IMR-90 (cell line): ENCODE measurements at regions of chr17 and their contacts with region 1.

Region 1: DNA sequence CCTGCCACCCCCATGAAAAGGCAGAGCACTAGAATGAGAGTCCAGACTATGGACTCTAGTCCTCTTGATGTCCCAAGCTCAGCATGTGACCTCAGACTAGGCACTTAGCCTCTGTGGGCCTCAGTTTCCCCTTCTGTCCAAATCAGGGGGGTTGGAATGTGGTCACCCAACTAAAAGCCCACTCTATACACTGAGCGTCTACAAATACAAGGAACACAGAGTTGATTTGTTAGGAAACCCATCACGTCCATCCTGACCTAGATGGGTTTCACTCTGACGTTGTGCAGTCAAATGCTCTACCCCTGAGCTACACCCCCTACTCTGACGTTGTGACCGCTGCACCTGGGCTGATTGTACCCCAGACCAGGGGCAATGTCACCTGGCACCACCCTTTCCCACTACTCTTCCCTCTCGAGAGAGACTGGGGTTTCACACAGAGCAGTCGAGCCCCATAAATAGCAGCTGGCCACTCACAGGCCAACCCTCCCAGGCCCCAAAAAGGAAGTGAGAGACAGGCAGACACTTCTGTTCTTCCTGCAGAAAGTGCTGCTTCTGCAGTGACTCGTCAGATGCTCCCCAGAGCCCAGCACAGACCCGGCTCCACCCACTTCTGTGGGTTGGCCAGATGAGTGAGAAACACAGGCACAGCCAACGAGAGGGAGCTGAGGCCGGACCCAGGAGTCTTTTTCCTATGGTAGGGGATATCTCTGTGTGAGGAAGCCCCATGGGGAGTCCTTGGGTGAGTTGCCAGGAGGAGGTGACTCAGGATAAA is 16.1 kb upstream of the TNFRSF13B start:
- DNase-seq: peak; percentile 75
- ATAC-seq: peak; percentile 87
- H3K4me3 ChIP-seq: no peak overlapping the region
- H3K27ac ChIP-seq: no peak overlapping the region
- H3K4me1 ChIP-seq: peaks cover 10% of the 10 kb centered on the region
- H3K27me3 ChIP-seq: 0 out of 2 replicates have a peak, but pooled peaks cover under 1% of the 10 kb centered on the region
- CTCF ChIP-seq: no peak
- POLR2A ChIP-seq: no peak
- RAD21 ChIP-seq: no peak

Region 2: GRCh38 chr17:16537130-16537458 is 450.9 kb before region 1 on chr17:
- CTCF ChIA-PET with region 1: no interaction called
- POLR2A ChIA-PET with region 1: no interaction called
- dilution Hi-C with region 1: no loop called
- in situ Hi-C with region 1: no loop called
- intact Hi-C with region 1: loop called (anchors 2 kb)
- DNase-seq: no peak
- ATAC-seq: no peak
- H3K4me3 ChIP-seq: no peak overlapping the region
- H3K27ac ChIP-seq: no peak overlapping the region
- H3K4me1 ChIP-seq: no peaks in the 10 kb centered on the region
- H3K27me3 ChIP-seq: no peaks in the 10 kb centered on the region
- CTCF ChIP-seq: no peak
- POLR2A ChIP-seq: no peak
- RAD21 ChIP-seq: no peak

Region 3: GRCh38 chr17:16589097-16589969 is 398.7 kb before region 1 on chr17:
- CTCF ChIA-PET with region 1: no interaction called
- POLR2A ChIA-PET with region 1: no interaction called
- dilution Hi-C with region 1: no loop called
- in situ Hi-C with region 1: no loop called
- intact Hi-C with region 1: loop called (anchors 10 kb)
- DNase-seq: peak; percentile 78
- ATAC-seq: peak; percentile 99
- H3K4me3 ChIP-seq: peak overlapping the region; percentile 64
- H3K27ac ChIP-seq: no peak overlapping the region
- H3K4me1 ChIP-seq: no peaks in the 10 kb centered on the region
- H3K27me3 ChIP-seq: peaks cover 9% of the 10 kb centered on the region
- CTCF ChIP-seq: peak; percentile 96
- POLR2A ChIP-seq: no peak
- RAD21 ChIP-seq: peak; percentile 73

Region 4: DNA sequence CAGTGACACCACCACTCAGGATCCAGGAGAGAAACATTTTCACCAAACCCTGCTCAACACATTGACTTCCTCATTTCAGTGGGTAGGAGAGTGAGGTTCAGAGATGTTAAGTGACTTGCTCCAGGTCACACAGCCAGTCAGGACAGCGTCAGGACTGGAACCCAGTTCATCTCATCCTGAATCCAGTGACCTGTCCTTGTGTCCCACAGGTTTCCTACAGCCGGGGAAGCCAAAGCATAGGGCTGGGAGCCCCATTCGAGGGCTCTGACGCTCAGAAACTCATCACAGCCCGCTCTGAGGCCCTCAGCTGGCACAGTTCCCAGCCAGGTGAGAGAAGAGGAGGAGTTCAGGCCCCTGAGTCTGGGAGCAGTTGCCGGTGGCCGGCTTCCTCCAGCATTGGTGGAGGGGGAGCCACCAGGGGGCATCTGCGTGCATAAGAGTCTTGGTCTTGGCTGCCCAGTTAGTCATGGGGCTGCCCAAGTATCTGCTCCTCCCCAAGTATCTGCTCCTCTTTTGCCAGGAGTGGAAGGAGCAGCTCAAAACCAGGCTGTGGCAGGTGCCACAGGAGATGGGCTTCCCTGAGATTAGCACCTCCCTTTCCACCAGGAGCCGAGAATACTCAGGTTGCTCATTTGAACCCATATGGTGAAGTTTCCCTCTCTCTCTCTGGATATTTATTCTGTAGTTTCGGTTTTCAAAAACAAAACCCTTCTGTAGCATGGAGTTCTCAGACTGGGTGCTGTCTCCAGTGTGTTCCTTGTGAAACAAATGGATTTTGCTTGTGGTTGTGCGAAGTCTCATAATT is 72.1 kb before region 1 on chr17:
- CTCF ChIA-PET with region 1: interaction called, 5 read pairs
- POLR2A ChIA-PET with region 1: no interaction called
- dilution Hi-C with region 1: no loop called
- in situ Hi-C with region 1: no loop called
- intact Hi-C with region 1: loop called (anchors 1 kb)
- DNase-seq: peak; percentile 16
- ATAC-seq: peak; percentile 79
- H3K4me3 ChIP-seq: no peak overlapping the region
- H3K27ac ChIP-seq: no peak overlapping the region
- H3K4me1 ChIP-seq: no peaks in the 10 kb centered on the region
- H3K27me3 ChIP-seq: peaks cover 40% of the 10 kb centered on the region
- CTCF ChIP-seq: peak; percentile 49
- POLR2A ChIP-seq: no peak
- RAD21 ChIP-seq: peak; percentile 48

Region 5: GRCh38 chr17:17028059-17028877 is 40.3 kb after region 1 on chr17:
- CTCF ChIA-PET with region 1: no interaction called
- POLR2A ChIA-PET with region 1: no interaction called
- dilution Hi-C with region 1: no loop called
- in situ Hi-C with region 1: no loop called
- intact Hi-C with region 1: no loop called
- DNase-seq: peak; percentile 35
- ATAC-seq: peak; percentile 11; the same call in 1 of the 2 replicates
- H3K4me3 ChIP-seq: no peak overlapping the region
- H3K27ac ChIP-seq: no peak overlapping the region
- H3K4me1 ChIP-seq: peaks cover 10% of the 10 kb centered on the region
- H3K27me3 ChIP-seq: no peaks in the 10 kb centered on the region
- CTCF ChIP-seq: no peak
- POLR2A ChIP-seq: no peak
- RAD21 ChIP-seq: no peak